Left cardiac atrium (tissue), 4 donors: ENCODE measurements at regions of chr1 and their contacts with region 1.

Region 1: DNA sequence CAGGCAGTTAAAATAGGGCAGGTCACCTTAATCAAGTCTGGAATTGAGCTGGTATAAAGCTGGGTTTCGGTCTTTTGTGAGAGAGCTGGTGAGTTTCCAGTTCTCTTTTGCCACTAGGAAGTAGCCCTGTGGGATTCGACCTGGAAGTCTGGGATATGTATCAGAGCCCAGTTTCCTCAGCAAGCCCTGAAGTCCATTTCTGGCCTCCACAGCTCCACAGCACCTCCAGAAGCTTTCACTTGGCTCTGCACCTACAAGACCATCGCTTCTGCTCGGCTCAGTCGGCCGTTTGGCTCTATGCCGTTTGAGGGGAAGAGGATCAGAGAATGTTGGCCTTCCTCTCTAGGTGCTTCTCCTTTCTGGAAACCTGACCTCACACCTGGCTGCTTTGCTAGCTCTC is 148.0 kb downstream of the GALNT2 start:
- DNase-seq: peak; percentile 71
- ATAC-seq: peak; percentile 85 to 93

Region 2: GRCh38 chr1:229887043-229887822 is 327.8 kb before region 1 on chr1:
- intact Hi-C with region 1: loop called in 1 of 2 experiments (anchors 1 kb)
- DNase-seq: no peak
- ATAC-seq: peak; percentile 89

Region 3: GRCh38 chr1:230104395-230105244 is 110.4 kb before region 1 on chr1:
- intact Hi-C with region 1: loop called in 1 of 2 experiments (anchors 10 kb)
- DNase-seq: peak; percentile 99
- ATAC-seq: peak; percentile 87 to 93

Region 4: GRCh38 chr1:230268366-230269170 is 53.5 kb after region 1 on chr1:
- intact Hi-C with region 1: no loop called
- DNase-seq: no peak
- ATAC-seq: peak; percentile 75 to 77